Endothelial cell of umbilical vein (primary cell): ENCODE measurements at regions of chr3 and their contacts with region 1.

Region 1: DNA sequence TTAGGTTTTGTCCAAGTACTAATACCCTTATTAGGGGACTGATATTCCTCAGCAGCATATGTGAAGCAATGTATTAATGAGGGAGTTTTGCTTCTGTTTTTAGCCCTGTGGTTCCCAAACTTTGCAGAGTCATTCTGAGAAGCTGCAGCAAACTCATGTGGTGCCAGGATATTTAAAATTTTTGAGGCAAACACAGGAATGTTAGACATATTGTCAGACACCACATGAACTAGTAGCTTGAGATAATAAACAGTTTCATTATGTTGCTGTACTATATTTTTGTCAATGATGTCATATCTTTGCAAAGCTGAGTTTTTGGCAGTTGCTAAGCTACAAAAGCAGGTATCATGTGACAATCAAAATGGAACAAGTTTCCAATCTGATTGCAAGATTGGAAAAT is 36.6 kb downstream of the ATP6V1A start:
- DNase-seq: peak; percentile 90
- H3K4me3 ChIP-seq: peak overlapping the region in 1 of 3 experiments; percentile 41
- H3K27ac ChIP-seq: peak overlapping the region; percentile 94
- H3K4me1 ChIP-seq: peaks cover 26% of the 10 kb centered on the region
- H3K27me3 ChIP-seq: no peaks in the 10 kb centered on the region
- CTCF ChIP-seq: no peak
- POLR2A ChIP-seq: no peak

Region 2: GRCh38 chr3:113825090-113825489 is 41.6 kb after region 1 on chr3:
- CTCF ChIA-PET with region 1: interaction called, 5 read pairs
- POLR2A ChIA-PET with region 1: interaction called, 3 read pairs
- dilution Hi-C with region 1: no loop called
- intact Hi-C with region 1: loop called (anchors 1 kb)
- DNase-seq: peak; percentile 45
- H3K4me3 ChIP-seq: no peak overlapping the region
- H3K27ac ChIP-seq: no peak overlapping the region
- H3K4me1 ChIP-seq: peaks cover 10% of the 10 kb centered on the region
- H3K27me3 ChIP-seq: no peaks in the 10 kb centered on the region
- CTCF ChIP-seq: peak in 1 of 2 donors; percentile 20
- POLR2A ChIP-seq: no peak